Activated CD4-positive, alpha-beta memory T cell treated with anti-CD3 and anti-CD28 coated beads, Interleukin-2, amount 10 ng/mL, durations not matched to agents 7 days and 5 days (primary cell): ENCODE measurements at regions of chr4 and their contacts with region 1.

Region 1: GRCh38 chr4:110516106-110516922 is 40.4 kb downstream of the ENPEP start:
- DNase-seq: peak; percentile 75
- H3K4me3 Mint-ChIP-seq: peak overlapping the region; percentile 99
- H3K27ac Mint-ChIP-seq: peak overlapping the region; percentile 49
- H3K4me1 Mint-ChIP-seq: peaks cover 14% of the 10 kb centered on the region
- H3K27me3 Mint-ChIP-seq: peaks cover 15% of the 10 kb centered on the region

Region 2: DNA sequence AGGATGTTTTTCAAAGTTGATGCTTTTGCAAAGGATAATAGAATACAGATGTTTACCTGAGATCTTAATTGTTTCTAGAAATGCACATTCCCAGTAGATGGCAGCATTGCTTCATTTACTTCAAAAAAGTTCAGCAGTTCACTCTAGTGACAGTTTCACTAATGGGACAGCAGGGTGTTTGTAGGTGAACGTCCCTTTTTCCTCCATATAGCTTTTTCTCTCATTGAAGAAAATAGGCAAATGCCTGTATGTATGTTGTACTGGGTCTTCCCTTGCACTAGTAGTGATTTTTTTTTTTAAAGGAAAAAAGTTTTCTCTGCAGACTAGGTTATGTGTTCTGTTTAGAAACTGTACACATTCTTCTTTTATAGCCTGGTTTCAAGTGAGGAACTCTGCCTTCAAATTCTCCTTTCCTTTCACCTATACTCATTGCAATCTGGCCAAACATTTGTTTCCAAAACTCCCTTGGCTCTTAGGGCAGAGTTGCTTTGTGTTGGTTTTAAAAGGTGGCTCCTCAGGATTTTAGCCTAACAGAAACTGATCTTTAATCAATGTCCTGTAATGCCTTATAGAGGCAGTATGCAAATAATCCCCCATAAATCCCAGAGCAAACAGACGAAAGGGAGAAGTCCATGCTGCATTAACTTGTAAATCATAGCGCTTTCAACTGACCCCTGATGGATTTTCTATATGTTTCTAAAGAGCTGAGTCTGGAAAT is 517.3 kb before region 1 on chr4:
- CTCF ChIA-PET with region 1: interaction called, 312 read pairs
- POLR2A ChIA-PET with region 1: no interaction called
- DNase-seq: no peak
- H3K4me3 Mint-ChIP-seq: no peak overlapping the region
- H3K27ac Mint-ChIP-seq: no peak overlapping the region
- H3K4me1 Mint-ChIP-seq: peaks cover 26% of the 10 kb centered on the region
- H3K27me3 Mint-ChIP-seq: peaks cover 13% of the 10 kb centered on the region

Region 3: DNA sequence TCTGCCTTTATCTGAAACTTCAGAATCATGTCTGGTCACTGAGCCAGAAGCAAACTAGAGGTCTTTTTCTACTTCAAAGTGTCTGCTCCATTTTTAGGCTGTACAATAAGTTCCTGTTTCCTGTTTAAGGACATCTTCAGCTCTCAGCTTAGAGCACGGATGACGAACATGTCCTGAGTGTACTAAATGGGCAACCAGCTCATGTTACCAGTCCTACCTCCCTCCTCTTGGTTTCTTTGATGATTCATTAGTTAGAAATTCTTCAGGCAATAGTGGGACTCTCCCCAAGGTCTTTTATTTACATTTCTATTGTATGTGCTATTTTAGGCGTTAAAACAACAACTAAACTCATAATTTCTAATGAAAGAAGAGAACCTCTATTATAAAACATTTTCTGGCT is 17.6 kb after region 1 on chr4:
- CTCF ChIA-PET with region 1: interaction called, 15 read pairs
- POLR2A ChIA-PET with region 1: no interaction called
- DNase-seq: no peak
- H3K4me3 Mint-ChIP-seq: peak overlapping the region; percentile 17
- H3K27ac Mint-ChIP-seq: no peak overlapping the region
- H3K4me1 Mint-ChIP-seq: peaks cover 12% of the 10 kb centered on the region
- H3K27me3 Mint-ChIP-seq: peaks cover 28% of the 10 kb centered on the region